GM18951 (cell line): ENCODE measurements at regions of chr12 and their contacts with region 1.

Region 1: GRCh38 chr12:15584366-15585041 is 204.7 kb downstream of the EPS8 start:
- POLR2A ChIP-seq: no peak

Region 2: DNA sequence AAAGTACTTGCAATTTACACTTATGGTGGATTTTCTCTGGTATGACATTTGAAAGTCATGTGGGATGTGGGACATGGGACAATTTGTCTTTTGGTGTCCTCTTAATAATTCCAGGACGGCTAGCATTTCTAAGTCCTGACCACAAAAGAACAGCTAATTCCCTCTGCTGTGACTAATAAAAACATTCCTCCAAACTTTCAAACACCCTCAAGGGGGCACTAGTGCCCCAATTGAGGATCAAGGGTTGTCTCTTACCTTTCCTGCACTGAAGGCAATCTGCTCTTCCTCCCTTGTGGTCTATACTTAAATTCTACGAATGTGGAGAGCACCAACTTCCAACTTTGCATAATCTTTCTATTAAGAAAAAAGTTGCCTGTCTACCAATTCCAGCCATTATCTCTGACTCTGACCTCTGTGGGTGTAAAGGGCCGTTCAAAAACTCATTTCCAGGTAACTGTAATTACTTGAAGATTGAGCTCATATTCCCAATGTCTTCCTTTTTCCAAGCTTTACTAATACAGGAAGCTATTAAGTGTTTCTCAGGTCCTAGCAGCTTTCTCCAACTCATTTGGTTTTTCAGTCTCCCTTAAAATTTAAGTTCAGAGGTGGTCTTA is 52.0 kb before region 1 on chr12:
- in situ Hi-C with region 1: loop called (anchors 5 kb)
- POLR2A ChIP-seq: no peak

Region 3: GRCh38 chr12:15852383-15852782 is 267.9 kb after region 1 on chr12:
- in situ Hi-C with region 1: loop called (anchors 5 kb)
- POLR2A ChIP-seq: no peak